Left cardiac atrium (tissue), 4 donors: ENCODE measurements at regions of chr12 and their contacts with region 1.

Region 1: DNA sequence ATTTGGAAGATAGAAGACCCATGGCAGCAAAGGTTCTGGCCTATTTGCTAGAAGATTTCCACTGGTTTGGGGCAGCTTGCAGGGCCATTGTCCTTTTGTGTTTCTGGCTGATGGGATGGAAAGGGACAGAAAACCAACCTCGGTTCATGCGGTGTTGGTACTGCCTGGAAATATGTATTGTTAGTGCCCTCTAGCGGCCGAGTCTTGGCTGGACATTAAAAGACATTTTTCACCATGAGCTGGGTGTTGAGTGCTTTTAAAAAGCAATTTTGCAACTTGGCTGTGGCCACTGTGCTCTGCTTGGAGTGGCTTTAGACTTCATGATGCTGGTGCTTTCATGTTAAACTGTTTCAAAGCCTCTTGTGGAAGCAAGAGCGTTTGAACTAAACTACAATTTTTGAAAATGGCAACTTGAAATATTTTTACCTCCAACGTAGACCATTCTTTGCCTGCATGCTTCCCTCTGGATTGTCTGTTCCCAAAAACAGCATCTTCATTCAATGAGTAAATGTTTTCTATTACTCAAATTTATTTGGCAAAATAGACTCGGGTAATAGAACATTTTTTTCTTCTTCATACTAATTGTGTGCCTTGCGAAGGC is 102.7 kb upstream of the TBX5 start:
- DNase-seq: peak; percentile 74
- ATAC-seq: peak; percentile 84 to 92

Region 2: DNA sequence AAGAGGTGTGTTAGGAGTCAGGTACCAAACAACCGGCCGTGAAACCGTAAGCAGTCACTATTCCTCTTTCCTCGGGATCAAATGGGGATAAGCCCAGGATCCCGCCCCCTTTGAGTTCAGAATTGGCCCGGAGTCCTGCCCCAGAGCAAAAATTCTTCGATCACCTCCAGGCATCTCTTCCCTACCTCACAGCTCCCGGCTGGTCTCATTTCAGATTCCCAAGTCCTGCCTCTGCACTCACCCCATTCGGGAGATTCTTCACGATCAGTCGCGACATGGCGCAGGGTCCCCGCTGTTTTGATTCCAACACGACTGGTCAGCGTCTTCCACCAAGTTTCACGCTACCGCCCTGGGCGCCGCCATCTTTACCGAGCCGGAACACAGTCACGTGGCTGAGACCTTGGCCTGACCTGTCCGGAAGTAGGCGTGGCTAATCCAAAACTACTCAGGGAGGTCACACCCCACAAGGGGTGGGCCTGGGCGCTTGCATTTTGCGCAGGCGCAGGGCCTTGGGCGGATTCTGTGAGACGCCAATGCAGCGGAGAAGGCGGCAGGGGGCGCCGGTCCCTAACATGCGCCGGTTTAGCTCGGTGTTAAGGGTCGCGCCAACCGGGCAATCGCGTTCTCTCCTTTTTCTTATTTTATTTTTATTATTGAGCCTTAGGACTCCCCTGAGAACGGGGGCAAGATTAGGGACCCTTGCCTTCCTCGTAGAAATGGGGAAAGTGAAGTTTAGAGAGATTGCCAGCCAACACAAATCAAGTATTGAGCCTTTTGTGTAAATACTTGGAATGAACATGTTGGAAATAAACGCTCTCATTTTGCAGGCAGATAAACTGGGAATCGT is 542.5 kb before region 1 on chr12 and contains the start of gene RBM19:
- intact Hi-C with region 1: loop called in 1 of 2 experiments (anchors 10 kb)
- DNase-seq: peak; percentile 98
- ATAC-seq: peak; percentile 100
- total RNA-seq, gene RBM19: 18.1 to 18.8 TPM

Region 3: DNA sequence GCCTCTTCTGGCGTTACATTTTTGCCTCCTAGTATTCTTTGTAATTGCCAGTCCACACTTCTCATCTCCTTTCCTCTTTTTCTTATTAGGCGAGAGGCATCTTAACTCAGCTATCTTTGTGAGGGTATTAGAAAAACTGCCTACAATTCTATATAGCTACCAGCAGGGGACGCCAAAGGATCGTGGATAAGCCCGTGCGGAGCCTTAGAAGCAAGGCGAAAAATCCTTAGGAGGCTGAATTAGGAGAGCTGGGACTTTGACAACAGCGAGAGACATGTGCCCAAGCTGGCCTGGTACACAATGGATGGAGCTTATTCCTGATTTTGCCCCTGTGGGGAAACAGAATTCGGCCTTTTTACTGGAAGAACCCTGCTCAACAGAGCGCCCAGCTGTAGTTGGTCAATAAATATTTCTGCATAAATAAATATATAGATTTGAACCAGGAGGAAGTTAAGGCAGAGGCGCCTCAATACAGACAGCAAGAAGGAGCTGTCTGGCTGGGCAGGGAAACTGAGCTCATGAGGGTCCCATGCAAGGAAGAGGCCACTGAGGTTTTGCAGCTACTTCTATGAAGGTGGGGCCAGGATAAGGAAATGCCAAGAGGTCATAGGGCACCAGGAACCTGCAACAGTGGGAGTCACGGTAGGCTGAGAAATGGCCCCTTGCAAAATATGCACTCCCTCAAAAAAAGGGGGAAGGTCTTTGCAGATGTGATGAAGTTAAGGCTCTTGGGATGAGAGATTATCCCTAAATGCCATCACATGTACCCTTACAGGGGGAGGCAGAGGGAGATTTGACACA is 527.9 kb before region 1 on chr12:
- intact Hi-C with region 1: loop called in 1 of 2 experiments (anchors 10 kb)
- DNase-seq: peak; percentile 28
- ATAC-seq: peak; percentile 64 to 86

Region 4: GRCh38 chr12:114166362-114166761 is 342.3 kb before region 1 on chr12:
- intact Hi-C with region 1: loop called in 1 of 2 experiments (anchors 5 kb)
- DNase-seq: peak; percentile 29
- ATAC-seq: peak; percentile 71 to 74